Activated CD4-positive, alpha-beta T cell treated with anti-CD3 and anti-CD28 coated beads for 36 hours (primary cell): ENCODE measurements at regions of chr9 and their contacts with region 1.

Region 1: DNA sequence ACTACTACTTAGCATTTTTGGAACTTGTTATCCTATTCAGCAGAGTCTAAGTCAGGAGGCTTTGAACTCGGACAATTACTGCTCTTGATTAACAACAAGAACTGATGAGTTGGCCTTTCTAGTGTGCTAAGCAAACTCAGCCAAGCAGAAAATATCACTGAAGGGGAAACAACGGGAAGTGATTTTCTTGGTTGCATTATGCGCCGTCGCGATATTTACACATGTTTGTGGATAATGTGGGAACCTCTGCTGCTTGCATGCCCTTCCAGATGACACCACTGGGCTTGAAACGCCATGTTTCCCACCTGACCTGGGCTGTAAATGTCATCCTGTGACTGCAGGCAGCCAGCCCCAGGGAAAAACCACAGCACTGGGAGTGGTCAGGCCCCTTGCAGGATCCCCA is 205.5 kb downstream of the PAX5 start:
- DNase-seq: no peak
- ATAC-seq: no peak
- H3K4me3 Mint-ChIP-seq: no peak overlapping the region
- H3K27ac Mint-ChIP-seq: no peak overlapping the region
- H3K4me1 Mint-ChIP-seq: no peaks in the 10 kb centered on the region
- H3K27me3 Mint-ChIP-seq: no peaks in the 10 kb centered on the region

Region 2: DNA sequence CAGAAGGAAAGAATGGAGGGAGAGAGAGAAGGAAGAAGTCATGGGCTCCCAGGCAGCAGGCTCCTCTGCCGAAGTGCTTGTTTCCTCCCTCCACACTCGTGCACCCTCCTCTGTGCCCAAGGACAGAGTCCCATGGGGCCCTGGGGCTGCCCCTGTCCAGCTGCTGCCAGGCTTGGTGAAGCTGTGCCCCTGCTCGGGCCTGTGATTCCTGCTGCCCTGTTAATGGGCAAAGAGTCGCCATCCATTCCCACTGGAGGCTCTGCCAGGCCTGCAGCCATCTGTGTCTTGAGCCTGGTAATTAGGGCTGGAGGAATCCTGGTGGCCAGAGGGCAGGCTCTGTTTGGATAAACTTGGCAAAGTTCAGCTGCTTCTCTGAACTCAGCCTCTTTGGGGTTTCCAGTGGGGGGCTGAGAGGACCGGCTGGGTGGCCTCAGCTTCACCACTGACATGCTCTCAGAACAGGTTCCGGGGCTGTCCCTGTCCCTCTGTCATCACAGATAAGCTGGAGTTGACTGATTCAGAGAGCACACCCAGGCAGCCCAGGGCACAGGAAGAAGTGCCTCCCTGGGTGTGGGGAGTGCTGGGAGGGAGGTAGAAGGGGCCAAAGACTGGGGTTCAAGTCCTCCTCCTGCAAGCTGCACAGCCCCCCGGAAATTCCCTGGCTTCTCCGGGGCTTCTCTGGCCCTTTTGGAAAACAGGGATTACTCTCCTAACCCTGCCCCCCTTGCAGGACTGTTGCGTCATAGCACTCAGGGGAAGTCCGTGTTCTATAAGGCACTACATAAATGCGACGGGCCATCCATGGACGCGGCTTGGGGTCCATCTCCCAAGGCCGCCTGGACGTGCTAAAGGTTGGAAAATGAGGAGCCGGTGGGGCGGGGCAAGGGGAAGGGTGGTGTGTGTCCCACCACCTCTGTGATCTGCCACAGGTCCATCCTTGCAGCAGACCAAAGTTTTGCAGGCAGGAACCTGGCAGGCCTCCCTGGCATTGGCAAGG is 50.7 kb after region 1 on chr9:
- CTCF ChIA-PET with region 1: interaction called, 3 read pairs
- POLR2A ChIA-PET with region 1: no interaction called
- intact Hi-C with region 1: loop called in 1 of 2 experiments (anchors 5 kb)
- DNase-seq: peak; percentile 65
- ATAC-seq: peak; percentile 99
- H3K4me3 Mint-ChIP-seq: no peak overlapping the region
- H3K27ac Mint-ChIP-seq: no peak overlapping the region
- H3K4me1 Mint-ChIP-seq: no peaks in the 10 kb centered on the region
- H3K27me3 Mint-ChIP-seq: peaks cover 11% of the 10 kb centered on the region